OCI-LY7 (cell line): ENCODE measurements at regions of chr19 and their contacts with region 1.

Region 1: GRCh38 chr19:46283771-46284170 is 13.1 kb upstream of the HIF3A start:
- DNase-seq: no peak
- H3K4me3 ChIP-seq: no peak overlapping the region
- H3K27ac ChIP-seq: no peak overlapping the region
- H3K4me1 ChIP-seq: no peaks in the 10 kb centered on the region
- CTCF ChIP-seq: no peak

Region 2: DNA sequence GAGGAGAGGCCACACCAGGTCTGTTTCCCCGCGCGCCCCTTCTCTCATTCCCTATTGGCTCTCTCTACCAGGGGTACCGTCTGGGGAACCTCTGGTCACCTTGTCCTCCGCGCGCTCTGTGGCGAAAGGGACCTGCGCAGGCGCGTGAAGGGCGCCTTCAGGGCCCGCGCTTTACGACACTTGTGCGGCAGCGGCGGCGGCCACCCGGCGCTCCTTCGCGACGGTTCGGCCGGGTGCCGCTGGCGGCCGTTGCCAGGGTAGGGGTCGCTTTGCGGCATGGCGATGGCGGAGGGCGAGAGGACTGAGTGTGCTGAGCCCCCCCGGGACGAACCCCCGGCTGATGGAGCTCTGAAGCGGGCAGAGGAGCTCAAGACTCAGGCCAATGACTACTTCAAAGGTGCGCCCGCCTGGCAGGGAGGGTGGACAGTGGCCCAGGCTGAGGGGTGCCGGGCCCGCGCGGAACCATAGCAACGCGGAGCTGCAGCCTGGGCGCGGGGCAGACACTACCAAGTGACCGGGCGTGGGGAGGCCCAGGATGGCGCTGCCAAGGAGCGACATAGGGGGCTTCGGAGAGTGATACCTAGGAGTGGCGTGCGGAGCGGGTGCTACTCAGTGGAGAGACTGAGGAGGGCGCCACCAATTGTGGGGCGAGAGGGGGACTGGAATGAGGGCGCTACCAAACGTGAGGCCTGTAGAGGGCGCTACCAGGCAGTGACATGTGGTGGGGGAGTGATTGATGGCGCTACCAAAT is 63.2 kb after region 1 on chr19 and contains the start of gene PPP5C:
- CTCF ChIA-PET with region 1: no interaction called
- POLR2A ChIA-PET with region 1: no interaction called
- intact Hi-C with region 1: no loop called
- DNase-seq: peak; percentile 96
- H3K4me3 ChIP-seq: peak within 1 kb of the TSS; percentile 100
- H3K27ac ChIP-seq: peak within 1 kb of the TSS; percentile 75
- H3K4me1 ChIP-seq: peaks cover 49% of the 10 kb centered on the region
- CTCF ChIP-seq: peak; percentile 100
- total RNA-seq, gene PPP5C: 110 and 118 TPM in 2 replicates

Region 3: GRCh38 chr19:46513461-46514236 is 229.9 kb after region 1 on chr19:
- CTCF ChIA-PET with region 1: no interaction called
- POLR2A ChIA-PET with region 1: no interaction called
- intact Hi-C with region 1: loop called (anchors 2 kb)
- DNase-seq: peak; percentile 85
- H3K4me3 ChIP-seq: no peak overlapping the region
- H3K27ac ChIP-seq: no peak overlapping the region
- H3K4me1 ChIP-seq: peaks cover 4% of the 10 kb centered on the region
- CTCF ChIP-seq: peak; percentile 95